ENCODE measurements at regions of chr13 and their contacts with region 1.

Region 1: GRCh38 chr13:43516401-43516833 is 270.4 kb downstream of the ENOX1 start:
- DNase-seq: peak; percentile 38 to 44
- ATAC-seq: peak; percentile 92 to 97
- H3K4me3 ChIP-seq: no peak overlapping the region
- H3K27ac ChIP-seq: peak overlapping the region; percentile 1 to 48 (median 32)
- H3K4me1 ChIP-seq: peaks cover 18 to 22% of the 10 kb centered on the region in 2 donors
- H3K27me3 ChIP-seq: no peaks in the 10 kb centered on the region
- CTCF ChIP-seq: no peak
- POLR2A ChIP-seq: no peak

Region 2: GRCh38 chr13:43368003-43368402 is 148.4 kb before region 1 on chr13:
- in situ Hi-C with region 1: no loop called
- intact Hi-C with region 1: loop called (anchors 10 kb)
- DNase-seq: no peak
- ATAC-seq: peak; percentile 25 to 51
- H3K4me3 ChIP-seq: peak overlapping the region; percentile 1 to 38 (median 26)
- H3K27ac ChIP-seq: peak overlapping the region; percentile 34 to 58 (median 52)
- H3K4me1 ChIP-seq: peaks cover 54 to 55% of the 10 kb centered on the region in 2 donors
- H3K27me3 ChIP-seq: no peaks in the 10 kb centered on the region
- CTCF ChIP-seq: no peak
- POLR2A ChIP-seq: no peak

Region 3: GRCh38 chr13:43405457-43405856 is 111.0 kb before region 1 on chr13:
- in situ Hi-C with region 1: no loop called
- intact Hi-C with region 1: no loop called
- DNase-seq: no peak
- ATAC-seq: peak in 1 of 2 donors; percentile 27
- H3K4me3 ChIP-seq: no peak overlapping the region
- H3K27ac ChIP-seq: peak overlapping the region; percentile 87 to 92 (median 88)
- H3K4me1 ChIP-seq: peaks cover 23% of the 10 kb centered on the region in 2 donors
- H3K27me3 ChIP-seq: no peaks in the 10 kb centered on the region
- CTCF ChIP-seq: no peak
- POLR2A ChIP-seq: no peak

Region 4: GRCh38 chr13:43469791-43470190 is 46.6 kb before region 1 on chr13:
- in situ Hi-C with region 1: no loop called
- intact Hi-C with region 1: loop called (anchors 5 kb)
- DNase-seq: no peak
- ATAC-seq: no peak
- H3K4me3 ChIP-seq: no peak overlapping the region
- H3K27ac ChIP-seq: no peak overlapping the region
- H3K4me1 ChIP-seq: peaks cover 4 to 16% of the 10 kb centered on the region in 2 donors
- H3K27me3 ChIP-seq: no peaks in the 10 kb centered on the region
- CTCF ChIP-seq: no peak
- POLR2A ChIP-seq: no peak

Measured in gastrocnemius medialis (tissue), 4 donors.